Activated CD8-positive, alpha-beta T cell treated with anti-CD3 and anti-CD28 coated beads for 36 hours (primary cell): ENCODE measurements at regions of chr15 and their contacts with region 1.

Region 1: GRCh38 chr15:43776718-43777583 is at the start of gene ELL3:
- DNase-seq: peak; percentile 96
- ATAC-seq: peak; percentile 86
- H3K4me3 Mint-ChIP-seq: peak within 1 kb of the TSS; percentile 80
- H3K27ac Mint-ChIP-seq: peak within 1 kb of the TSS; percentile 95
- H3K4me1 Mint-ChIP-seq: peaks cover 29% of the 10 kb centered on the region
- H3K27me3 Mint-ChIP-seq: no peaks in the 10 kb centered on the region
- CTCF ChIP-seq: peak; percentile 70
- total RNA-seq, gene ELL3: 2.3 to 2.4 TPM

Region 2: GRCh38 chr15:43749690-43750345 is 27.1 kb before region 1 on chr15:
- CTCF ChIA-PET with region 1: interaction called, 52 read pairs
- POLR2A ChIA-PET with region 1: interaction called, 13 read pairs
- intact Hi-C with region 1: no loop called
- DNase-seq: peak; percentile 69
- ATAC-seq: peak; percentile 43
- H3K4me3 Mint-ChIP-seq: peak overlapping the region; percentile 96
- H3K27ac Mint-ChIP-seq: peak overlapping the region; percentile 85
- H3K4me1 Mint-ChIP-seq: peaks cover 45% of the 10 kb centered on the region
- H3K27me3 Mint-ChIP-seq: no peaks in the 10 kb centered on the region
- CTCF ChIP-seq: no peak

Region 3: DNA sequence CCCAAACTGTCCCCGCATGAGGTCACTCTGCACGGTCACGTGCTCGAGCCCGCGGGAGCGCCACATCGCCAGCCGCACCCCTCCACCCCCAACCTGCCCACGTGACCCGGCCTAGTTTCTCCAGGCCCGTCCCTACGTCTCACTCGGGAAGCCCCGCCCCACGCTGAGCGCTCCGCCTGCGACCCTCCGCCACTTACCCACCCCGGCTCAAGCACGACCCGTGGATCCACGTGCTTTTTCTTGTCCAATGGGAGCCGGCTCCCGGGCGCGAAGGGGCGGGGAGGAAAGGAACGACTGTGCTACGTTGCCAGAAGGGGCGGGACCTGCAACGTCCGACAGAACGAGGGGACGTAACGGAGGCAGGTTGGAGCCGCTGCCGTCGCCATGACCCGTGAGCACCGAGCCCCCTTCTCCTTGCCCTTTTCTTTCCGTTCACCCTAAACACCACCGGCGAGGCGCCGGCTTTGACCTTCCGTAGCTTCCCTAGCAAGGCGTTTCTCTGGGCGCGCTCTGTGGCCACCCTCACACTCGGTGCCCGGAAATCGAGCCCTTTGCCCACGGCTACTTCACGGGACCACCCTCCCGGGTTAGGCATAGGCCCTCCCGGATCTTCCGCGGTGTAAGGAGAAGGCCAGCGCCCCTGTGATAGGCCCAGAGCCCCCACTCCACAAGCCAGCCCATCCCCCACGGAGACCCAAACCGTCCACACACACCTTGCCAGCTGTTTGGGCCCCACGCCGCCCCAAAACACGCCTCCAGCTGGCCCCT is 15.2 kb after region 1 on chr15 and contains the start of gene SERF2:
- CTCF ChIA-PET with region 1: interaction called, 17 read pairs
- POLR2A ChIA-PET with region 1: interaction called, 30 read pairs
- intact Hi-C with region 1: no loop called
- DNase-seq: peak; percentile 100
- ATAC-seq: peak; percentile 97
- H3K4me3 Mint-ChIP-seq: peak within 1 kb of the TSS; percentile 98
- H3K27ac Mint-ChIP-seq: peak within 1 kb of the TSS; percentile 98
- H3K4me1 Mint-ChIP-seq: peaks cover 43% of the 10 kb centered on the region
- H3K27me3 Mint-ChIP-seq: no peaks in the 10 kb centered on the region
- CTCF ChIP-seq: no peak
- total RNA-seq, gene SERF2: 775 to 810 TPM

Region 4: GRCh38 chr15:43800286-43801141 is 23.6 kb after region 1 on chr15 and contains the start of gene HYPK:
- CTCF ChIA-PET with region 1: interaction called, 15 read pairs
- POLR2A ChIA-PET with region 1: interaction called, 12 read pairs
- intact Hi-C with region 1: no loop called
- DNase-seq: peak; percentile 95
- ATAC-seq: peak; percentile 98
- H3K4me3 Mint-ChIP-seq: peak within 1 kb of the TSS; percentile 93
- H3K27ac Mint-ChIP-seq: peak within 1 kb of the TSS; percentile 99
- H3K4me1 Mint-ChIP-seq: peaks cover 43% of the 10 kb centered on the region
- H3K27me3 Mint-ChIP-seq: no peaks in the 10 kb centered on the region
- CTCF ChIP-seq: no peak
- total RNA-seq, gene HYPK: 15.5 to 16.1 TPM

Region 5: GRCh38 chr15:43824302-43825246 is 47.6 kb after region 1 on chr15 and contains the start of gene MFAP1:
- CTCF ChIA-PET with region 1: interaction called, 4 read pairs
- POLR2A ChIA-PET with region 1: interaction called, 15 read pairs
- intact Hi-C with region 1: no loop called
- DNase-seq: peak; percentile 95
- ATAC-seq: peak; percentile 84
- H3K4me3 Mint-ChIP-seq: peak within 1 kb of the TSS; percentile 94
- H3K27ac Mint-ChIP-seq: peak within 1 kb of the TSS; percentile 99
- H3K4me1 Mint-ChIP-seq: peaks cover 49% of the 10 kb centered on the region
- H3K27me3 Mint-ChIP-seq: no peaks in the 10 kb centered on the region
- CTCF ChIP-seq: no peak
- total RNA-seq, gene MFAP1: 39.8 to 43.1 TPM

Region 6: DNA sequence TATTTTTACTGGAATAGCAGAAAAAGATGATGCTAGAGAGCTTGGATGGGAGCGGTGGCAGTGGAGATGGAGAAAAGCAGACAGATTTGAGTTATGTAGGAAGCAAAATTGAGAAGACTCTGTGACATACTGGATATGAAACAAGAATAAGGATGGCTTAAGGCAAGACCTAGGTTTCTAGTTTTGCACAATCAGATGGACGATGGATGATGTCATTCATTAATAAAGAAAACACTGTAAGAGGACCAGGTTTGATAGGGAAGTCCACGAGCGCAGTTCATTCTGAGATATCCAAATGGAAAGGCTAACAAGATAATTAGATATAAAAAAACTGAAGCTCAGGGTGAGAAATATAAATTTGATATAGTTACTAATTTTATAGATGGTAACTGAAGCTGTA is 276.5 kb after region 1 on chr15:
- CTCF ChIA-PET with region 1: no interaction called
- POLR2A ChIA-PET with region 1: no interaction called
- intact Hi-C with region 1: no loop called
- DNase-seq: no peak
- ATAC-seq: no peak
- H3K4me3 Mint-ChIP-seq: no peak overlapping the region
- H3K27ac Mint-ChIP-seq: no peak overlapping the region
- H3K4me1 Mint-ChIP-seq: no peaks in the 10 kb centered on the region
- H3K27me3 Mint-ChIP-seq: peaks cover 18% of the 10 kb centered on the region
- CTCF ChIP-seq: no peak